Spleen (tissue), 13 donors: ENCODE measurements at regions of chrX and their contacts with region 1.

Region 1: GRCh38 chrX:129925305-129926092 is 19.5 kb downstream of the UTP14A start:
- DNase-seq: peak; percentile 80
- H3K4me3 ChIP-seq: no peak overlapping the region
- H3K27ac ChIP-seq: no peak overlapping the region
- H3K4me1 ChIP-seq: peaks cover 0 to 9% (median 0%) of the 10 kb centered on the region in 6 donors
- H3K27me3 ChIP-seq: no peaks in the 10 kb centered on the region
- CTCF ChIP-seq: peak; percentile 38 to 75 (median 62)
- POLR2A ChIP-seq: no peak

Region 2: GRCh38 chrX:129593137-129593536 is 332.4 kb before region 1 on chrX:
- intact Hi-C with region 1: no loop called
- DNase-seq: no peak
- H3K4me3 ChIP-seq: no peak overlapping the region
- H3K27ac ChIP-seq: no peak overlapping the region
- H3K4me1 ChIP-seq: no peaks in the 10 kb centered on the region
- H3K27me3 ChIP-seq: no peaks in the 10 kb centered on the region
- CTCF ChIP-seq: no peak
- POLR2A ChIP-seq: no peak

Region 3: GRCh38 chrX:129637217-129638109 is 288.0 kb before region 1 on chrX:
- intact Hi-C with region 1: no loop called
- DNase-seq: peak; percentile 91
- H3K4me3 ChIP-seq: no peak overlapping the region
- H3K27ac ChIP-seq: no peak overlapping the region
- H3K4me1 ChIP-seq: peaks cover 0 to 8% (median 5%) of the 10 kb centered on the region in 6 donors
- H3K27me3 ChIP-seq: no peaks in the 10 kb centered on the region
- CTCF ChIP-seq: peak; percentile 65 to 97 (median 90)
- POLR2A ChIP-seq: no peak

Region 4: DNA sequence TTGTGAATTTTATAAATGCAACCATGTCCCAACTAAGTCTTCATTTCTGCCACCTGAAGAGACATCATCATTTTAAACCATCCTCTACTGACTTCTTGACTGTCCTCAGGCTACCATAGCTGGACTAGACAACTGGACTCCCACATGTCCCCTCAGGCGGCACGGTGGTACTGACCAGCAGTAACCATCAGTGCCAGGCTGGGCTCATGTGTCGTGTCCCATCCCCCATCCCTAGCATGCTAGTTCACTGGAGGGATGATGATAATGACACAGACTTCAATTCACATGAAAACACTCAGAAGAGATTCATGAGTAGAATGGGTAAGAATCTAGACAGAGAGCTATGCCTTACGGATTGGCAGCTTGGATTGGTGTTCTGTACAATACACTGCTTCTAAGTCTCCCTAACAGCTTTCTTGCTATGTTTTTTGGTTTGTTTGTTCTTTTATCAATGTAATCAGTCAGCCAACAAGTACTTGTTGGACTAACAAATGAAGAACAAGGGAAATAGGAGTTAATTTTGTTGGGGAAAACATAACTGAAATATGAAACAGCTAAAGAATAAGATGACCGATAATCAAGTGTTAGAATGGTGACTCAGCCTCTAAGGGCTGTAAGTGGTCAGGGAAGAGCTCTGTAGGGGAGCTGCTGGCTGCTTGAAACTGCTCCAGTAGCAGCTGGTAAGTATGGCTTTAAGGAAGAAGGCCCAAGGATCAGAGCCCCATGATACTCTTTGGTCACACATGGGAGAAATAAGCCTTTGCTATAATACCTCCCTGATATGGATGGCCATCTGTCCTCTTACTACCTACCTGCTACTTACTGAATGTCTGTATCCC is 92.1 kb before region 1 on chrX:
- intact Hi-C with region 1: no loop called
- DNase-seq: no peak
- H3K4me3 ChIP-seq: no peak overlapping the region
- H3K27ac ChIP-seq: no peak overlapping the region
- H3K4me1 ChIP-seq: no peaks in the 10 kb centered on the region
- H3K27me3 ChIP-seq: no peaks in the 10 kb centered on the region
- CTCF ChIP-seq: no peak
- POLR2A ChIP-seq: no peak

Region 5: GRCh38 chrX:129963729-129964128 is 38.2 kb after region 1 on chrX:
- intact Hi-C with region 1: no loop called
- DNase-seq: no peak
- H3K4me3 ChIP-seq: no peak overlapping the region
- H3K27ac ChIP-seq: no peak overlapping the region
- H3K4me1 ChIP-seq: peaks cover 0 to 16% (median 4%) of the 10 kb centered on the region in 6 donors
- H3K27me3 ChIP-seq: peaks cover 0 to 4% (median 0%) of the 10 kb centered on the region in 7 donors
- CTCF ChIP-seq: no peak
- POLR2A ChIP-seq: no peak

Region 6: DNA sequence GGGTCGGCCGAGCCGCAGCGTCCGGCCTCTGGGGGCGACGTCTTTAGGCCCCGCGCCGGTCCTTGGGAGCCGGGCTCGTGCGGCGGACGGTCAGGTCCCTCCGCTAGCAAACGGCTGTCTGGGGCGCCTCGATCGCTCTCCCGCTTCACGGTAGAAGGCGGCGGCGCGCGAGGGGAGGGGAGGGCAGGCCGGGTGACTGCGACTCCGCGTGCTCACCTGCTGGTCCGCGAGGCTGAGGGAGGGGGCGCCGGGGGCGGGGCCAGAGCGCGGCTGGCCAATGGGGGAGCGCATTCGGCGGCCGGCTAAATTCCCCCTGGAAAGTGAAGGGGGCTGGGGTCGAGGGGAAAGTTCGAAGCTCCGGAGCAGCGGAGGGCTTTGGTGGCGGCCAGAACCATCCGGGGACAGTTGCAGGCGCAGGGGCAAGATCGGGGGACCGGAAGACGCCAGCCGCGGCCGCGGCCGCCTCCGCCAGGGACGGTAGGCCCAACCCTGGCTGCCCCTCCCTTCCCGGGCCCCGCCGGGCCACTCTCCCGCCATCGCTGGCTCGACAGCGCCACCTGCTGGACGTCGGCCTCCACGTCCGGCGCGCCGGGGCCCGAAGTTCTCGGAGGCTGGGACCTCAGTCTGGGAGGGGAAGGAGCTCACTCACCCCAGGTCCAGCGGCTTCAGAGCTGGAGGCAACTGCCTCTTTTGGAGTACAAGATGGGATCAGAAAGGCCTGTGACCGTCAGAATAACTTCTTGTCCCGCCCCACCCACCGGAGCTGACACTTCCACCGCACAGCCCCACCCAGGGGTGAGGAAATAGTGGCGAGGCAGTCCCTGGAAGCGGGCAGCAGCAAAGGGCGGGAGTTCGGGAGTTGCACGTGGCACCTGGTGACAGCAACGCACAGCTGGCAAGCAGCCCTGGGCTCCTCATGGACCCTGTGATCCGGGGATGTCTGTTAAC is 134.9 kb after region 1 on chrX:
- intact Hi-C with region 1: loop called (anchors 5 kb)
- DNase-seq: peak; percentile 97
- H3K4me3 ChIP-seq: peak overlapping the region in 7 of 8 donors; percentile 30 to 72 (median 42)
- H3K27ac ChIP-seq: peak overlapping the region in 7 of 8 donors; percentile 20 to 85 (median 49)
- H3K4me1 ChIP-seq: peaks cover 0 to 16% (median 8%) of the 10 kb centered on the region in 6 donors
- H3K27me3 ChIP-seq: no peaks in the 10 kb centered on the region
- CTCF ChIP-seq: peak; percentile 81 to 95 (median 92)
- POLR2A ChIP-seq: no peak